ENCODE measurements at regions of chr11 and their contacts with region 1.

Region 1: GRCh38 chr11:14413307-14414069 is 54.5 kb upstream of the RRAS2 start:
- DNase-seq: peak; percentile 41
- H3K4me3 Mint-ChIP-seq: no peak overlapping the region
- H3K27ac Mint-ChIP-seq: peak overlapping the region; percentile 20
- H3K4me1 Mint-ChIP-seq: peaks cover 36% of the 10 kb centered on the region
- H3K27me3 Mint-ChIP-seq: no peaks in the 10 kb centered on the region

Region 2: GRCh38 chr11:13831696-13832095 is 581.8 kb before region 1 on chr11:
- CTCF ChIA-PET with region 1: no interaction called
- intact Hi-C with region 1: no loop called
- DNase-seq: no peak
- H3K4me3 Mint-ChIP-seq: no peak overlapping the region
- H3K27ac Mint-ChIP-seq: no peak overlapping the region
- H3K4me1 Mint-ChIP-seq: peaks cover 4% of the 10 kb centered on the region
- H3K27me3 Mint-ChIP-seq: no peaks in the 10 kb centered on the region

Region 3: DNA sequence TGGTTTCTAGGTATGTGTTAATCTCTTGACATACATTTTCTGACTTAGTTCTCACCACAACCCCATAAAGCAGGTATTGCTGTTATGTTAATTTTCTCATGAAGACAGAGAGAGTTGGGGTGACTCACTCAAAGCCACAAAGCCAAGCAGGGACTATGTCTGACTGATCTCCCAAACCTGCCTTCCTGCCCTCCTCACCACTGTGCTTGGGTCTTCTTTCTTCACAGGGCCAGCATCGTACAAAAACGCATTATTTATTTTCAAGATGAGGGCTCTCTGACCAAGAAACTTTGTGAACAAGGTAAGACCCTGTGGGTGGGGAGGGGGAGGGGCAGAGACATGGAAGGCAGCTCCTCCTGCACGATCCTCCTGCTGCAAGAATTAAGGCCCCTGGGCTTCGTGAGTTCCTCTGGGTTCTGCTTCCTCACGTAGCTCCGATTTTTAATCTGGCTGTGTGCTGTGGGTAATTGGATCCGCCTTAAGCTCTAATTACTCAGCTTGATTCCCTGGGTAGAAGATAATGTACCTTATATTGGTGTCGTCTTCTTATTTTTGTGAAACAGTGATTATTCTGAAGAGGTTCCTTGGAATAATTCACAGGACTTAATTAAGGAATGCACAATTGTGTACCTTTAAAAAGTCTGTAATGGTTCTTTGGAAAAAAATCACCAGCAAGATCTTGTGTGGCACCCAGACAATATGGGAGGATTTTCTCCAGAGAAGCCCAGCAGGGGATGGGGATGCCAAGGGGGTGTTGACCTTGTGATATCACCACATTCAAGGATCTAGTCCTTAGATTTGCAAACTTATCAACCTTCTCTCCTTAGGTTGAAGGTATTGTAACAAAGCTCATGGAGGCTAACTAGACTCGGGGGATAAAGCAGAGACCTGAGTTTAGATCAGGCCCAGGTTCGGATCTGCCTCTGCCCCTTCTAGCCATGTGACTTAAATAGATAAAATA is 338.1 kb before region 1 on chr11:
- CTCF ChIA-PET with region 1: no interaction called
- intact Hi-C with region 1: loop called (anchors 1 kb)
- DNase-seq: peak; percentile 86
- H3K4me3 Mint-ChIP-seq: peak overlapping the region; percentile 13
- H3K27ac Mint-ChIP-seq: peak overlapping the region; percentile 62
- H3K4me1 Mint-ChIP-seq: peaks cover 55% of the 10 kb centered on the region
- H3K27me3 Mint-ChIP-seq: no peaks in the 10 kb centered on the region

Region 4: DNA sequence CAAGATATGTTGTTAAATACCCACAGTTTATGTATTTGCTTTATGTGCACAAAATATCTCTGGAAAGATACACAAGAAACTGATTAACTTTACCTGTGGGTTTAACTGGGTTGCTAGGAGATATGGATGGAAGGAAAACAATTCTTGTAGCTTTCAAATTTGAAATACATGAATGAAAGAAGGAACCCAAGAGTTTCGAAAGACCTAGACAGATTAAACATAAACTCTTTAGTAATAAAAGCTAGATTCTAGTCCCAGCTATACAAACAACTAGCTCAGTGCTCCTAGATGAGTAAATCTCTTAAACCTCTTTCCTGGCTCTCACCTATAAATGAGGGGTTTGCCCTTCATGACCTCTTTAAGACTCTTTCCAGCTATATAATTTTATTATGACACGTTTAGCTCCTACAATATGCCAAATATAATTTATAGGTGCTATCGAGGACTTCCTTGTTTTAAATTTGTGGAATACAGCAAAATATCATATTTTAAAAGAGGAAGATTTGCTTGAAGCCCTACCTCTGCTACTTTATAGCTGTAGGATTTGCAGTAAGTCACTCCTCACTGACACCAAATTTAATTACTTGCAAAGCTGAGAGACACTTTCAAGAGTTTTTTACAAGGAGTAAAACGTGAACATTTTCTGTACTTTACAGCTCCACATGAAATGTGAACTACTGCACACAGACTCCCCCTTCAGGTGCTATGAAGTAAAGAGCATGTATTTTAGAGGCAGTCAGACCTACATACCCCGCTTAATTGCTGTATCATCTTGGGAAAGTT is 105.2 kb before region 1 on chr11:
- CTCF ChIA-PET with region 1: interaction called, 15 read pairs
- intact Hi-C with region 1: loop called (anchors 2 kb)
- DNase-seq: no peak
- H3K4me3 Mint-ChIP-seq: no peak overlapping the region
- H3K27ac Mint-ChIP-seq: no peak overlapping the region
- H3K4me1 Mint-ChIP-seq: peaks cover 19% of the 10 kb centered on the region
- H3K27me3 Mint-ChIP-seq: no peaks in the 10 kb centered on the region

Region 5: GRCh38 chr11:14380947-14381561 is 32.4 kb before region 1 on chr11:
- CTCF ChIA-PET with region 1: interaction called, 3 read pairs
- intact Hi-C with region 1: loop called (anchors 1 kb)
- DNase-seq: peak; percentile 51
- H3K4me3 Mint-ChIP-seq: peak overlapping the region; percentile 71
- H3K27ac Mint-ChIP-seq: no peak overlapping the region
- H3K4me1 Mint-ChIP-seq: peaks cover 7% of the 10 kb centered on the region
- H3K27me3 Mint-ChIP-seq: peaks cover 19% of the 10 kb centered on the region

Region 6: GRCh38 chr11:14396273-14396672 is 17.2 kb before region 1 on chr11:
- CTCF ChIA-PET with region 1: no interaction called
- intact Hi-C with region 1: no loop called
- DNase-seq: no peak
- H3K4me3 Mint-ChIP-seq: no peak overlapping the region
- H3K27ac Mint-ChIP-seq: no peak overlapping the region
- H3K4me1 Mint-ChIP-seq: no peaks in the 10 kb centered on the region
- H3K27me3 Mint-ChIP-seq: no peaks in the 10 kb centered on the region

Region 7: DNA sequence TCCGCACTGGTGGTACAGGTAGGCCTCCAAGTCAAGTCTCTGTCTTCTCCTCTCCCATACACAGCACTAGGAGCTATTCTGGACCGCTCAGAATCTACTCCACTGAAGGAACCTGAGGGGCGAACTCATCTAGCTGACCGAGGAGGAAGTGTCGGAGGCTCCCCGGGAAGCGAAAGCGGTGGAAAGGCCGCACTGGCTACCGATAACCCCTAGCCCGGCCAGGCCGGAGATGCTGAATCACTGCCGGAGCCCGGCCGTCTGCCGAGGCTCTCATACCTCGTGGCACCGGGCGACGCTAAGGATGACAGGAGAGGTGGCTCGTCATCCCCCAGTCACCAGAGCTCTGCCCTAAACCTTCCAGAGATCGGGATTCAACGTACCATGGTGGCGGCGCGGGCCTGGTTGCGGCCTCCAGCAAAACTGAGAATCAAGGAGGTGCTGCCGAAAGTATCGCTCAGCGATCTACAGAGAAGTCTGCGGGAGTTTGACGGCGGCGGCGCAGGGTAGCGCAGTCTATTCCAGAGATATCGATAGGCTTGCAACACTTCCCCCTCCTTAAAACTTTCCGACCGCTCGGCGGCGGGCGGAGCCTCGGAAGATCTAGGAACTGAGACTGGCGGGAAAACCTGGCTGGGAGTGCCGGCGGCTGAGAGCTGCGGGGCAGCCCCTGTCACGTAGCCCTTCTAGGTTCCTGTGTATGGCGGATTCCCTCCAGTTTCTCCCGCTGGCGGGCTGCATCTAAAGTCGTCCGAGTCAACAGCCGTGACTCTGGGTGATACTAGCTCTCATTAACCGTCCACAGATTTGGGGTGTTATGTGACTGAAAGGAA is 106.6 kb after region 1 on chr11 and contains the start of gene PSMA1:
- CTCF ChIA-PET with region 1: no interaction called
- intact Hi-C with region 1: loop called (anchors 1 kb)
- DNase-seq: peak; percentile 98
- H3K4me3 Mint-ChIP-seq: peak within 1 kb of the TSS; percentile 96
- H3K27ac Mint-ChIP-seq: peak within 1 kb of the TSS; percentile 97
- H3K4me1 Mint-ChIP-seq: peaks cover 24% of the 10 kb centered on the region
- H3K27me3 Mint-ChIP-seq: no peaks in the 10 kb centered on the region
- total RNA-seq, gene PSMA1: 367 to 375 TPM